IMR-90 (cell line): ENCODE measurements at regions of chr6 and their contacts with region 1.

Region 1: DNA sequence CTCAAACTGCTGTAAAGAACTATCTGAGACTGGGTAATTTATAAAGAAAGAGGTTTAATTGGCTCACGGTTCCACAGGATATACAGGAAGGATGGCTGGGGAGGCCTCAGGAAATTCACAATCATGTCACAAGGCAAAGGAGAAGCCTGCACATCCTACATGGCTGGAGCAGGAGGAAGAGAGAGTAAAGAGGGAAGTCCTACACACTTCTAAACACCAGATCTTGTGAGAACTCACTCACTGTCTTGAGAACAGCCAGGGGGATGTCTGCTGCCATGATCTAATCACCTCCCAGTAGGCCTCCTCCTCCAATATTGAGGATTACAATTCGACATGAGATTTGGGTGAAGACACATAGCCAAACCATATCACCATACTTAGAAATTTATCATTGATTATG is 1307.0 kb upstream of the GJE1 start:
- DNase-seq: no peak
- ATAC-seq: no peak
- H3K4me3 ChIP-seq: no peak overlapping the region
- H3K27ac ChIP-seq: no peak overlapping the region
- H3K4me1 ChIP-seq: peaks cover 2% of the 10 kb centered on the region
- H3K27me3 ChIP-seq: no peaks in the 10 kb centered on the region
- CTCF ChIP-seq: no peak
- POLR2A ChIP-seq: no peak
- RAD21 ChIP-seq: no peak

Region 2: GRCh38 chr6:141088171-141088570 is 262.4 kb after region 1 on chr6:
- CTCF ChIA-PET with region 1: no interaction called
- POLR2A ChIA-PET with region 1: no interaction called
- dilution Hi-C with region 1: no loop called
- in situ Hi-C with region 1: no loop called
- intact Hi-C with region 1: loop called (anchors 10 kb)
- DNase-seq: no peak
- ATAC-seq: no peak
- H3K4me3 ChIP-seq: no peak overlapping the region
- H3K27ac ChIP-seq: no peak overlapping the region
- H3K4me1 ChIP-seq: no peaks in the 10 kb centered on the region
- H3K27me3 ChIP-seq: no peaks in the 10 kb centered on the region
- CTCF ChIP-seq: no peak
- POLR2A ChIP-seq: no peak
- RAD21 ChIP-seq: no peak